H1 (cell line): ENCODE measurements at regions of chr12 and their contacts with region 1.

Region 1: GRCh38 chr12:6285063-6285477 is 25.4 kb upstream of the PLEKHG6 start:
- DNase-seq: peak in 1 of 2 experiments; percentile 85
- H3K4me3 ChIP-seq: no peak overlapping the region
- H3K27ac ChIP-seq: no peak overlapping the region
- H3K4me1 ChIP-seq: peaks cover 0 to 5% (median 3%) of the 10 kb centered on the region in 4 experiments; a peak in 3 of 7 replicates
- H3K27me3 ChIP-seq: peaks cover 0 to 2% (median 0%) of the 10 kb centered on the region in 4 experiments; a peak in 2 of 7 replicates
- CTCF ChIP-seq: peak; percentile 83 to 92 (median 91)
- EP300 ChIP-seq: no peak
- POLR2A ChIP-seq: no peak
- RAD21 ChIP-seq: peak; percentile 98 to 99

Region 2: GRCh38 chr12:5733136-5733755 is 551.8 kb before region 1 on chr12:
- CTCF ChIA-PET with region 1: no interaction called
- POLR2A ChIA-PET with region 1: no interaction called
- DNase-seq: no peak
- H3K4me3 ChIP-seq: no peak overlapping the region
- H3K27ac ChIP-seq: no peak overlapping the region
- H3K4me1 ChIP-seq: no peaks in the 10 kb centered on the region
- H3K27me3 ChIP-seq: peaks cover 0 to 1% (median 0%) of the 10 kb centered on the region in 4 experiments; a peak in 1 of 7 replicates
- CTCF ChIP-seq: no peak
- EP300 ChIP-seq: no peak
- POLR2A ChIP-seq: no peak
- RAD21 ChIP-seq: no peak

Region 3: GRCh38 chr12:5988659-5989116 is 296.4 kb before region 1 on chr12:
- CTCF ChIA-PET with region 1: interaction called, 23 read pairs
- POLR2A ChIA-PET with region 1: no interaction called
- DNase-seq: peak; percentile 75 to 86
- H3K4me3 ChIP-seq: no peak overlapping the region
- H3K27ac ChIP-seq: no peak overlapping the region; the same call in 1 of the 2 replicates
- H3K4me1 ChIP-seq: peaks cover 2 to 6% (median 4%) of the 10 kb centered on the region in 4 experiments; a peak in 6 of 7 replicates
- H3K27me3 ChIP-seq: no peaks in the 10 kb centered on the region
- CTCF ChIP-seq: peak; percentile 93 to 99 (median 97)
- EP300 ChIP-seq: peak in 1 of 2 experiments; percentile 57; a peak in 1 of 3 replicates
- POLR2A ChIP-seq: no peak
- RAD21 ChIP-seq: peak; percentile 98 to 99

Region 4: DNA sequence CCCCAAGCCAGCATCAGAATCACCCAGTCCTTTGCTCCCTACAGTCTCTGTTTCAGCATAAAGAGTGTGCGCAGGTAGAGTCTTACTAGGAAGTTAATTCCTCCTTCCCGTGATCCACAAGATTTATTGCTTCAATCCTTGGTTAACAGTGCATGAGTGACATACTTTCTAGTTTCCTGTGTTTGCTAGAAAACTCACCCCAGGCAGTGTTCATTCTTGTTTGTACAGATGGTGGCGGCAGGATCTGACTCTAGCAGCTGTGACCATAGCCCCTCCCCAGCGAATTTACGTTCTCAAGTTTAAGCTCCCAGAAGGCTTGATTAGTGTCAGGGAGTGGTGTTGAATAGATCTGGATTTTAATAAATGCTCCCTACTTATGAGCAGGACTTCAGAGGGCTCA is 264.1 kb before region 1 on chr12:
- CTCF ChIA-PET with region 1: no interaction called
- POLR2A ChIA-PET with region 1: no interaction called
- DNase-seq: no peak
- H3K4me3 ChIP-seq: no peak overlapping the region
- H3K27ac ChIP-seq: no peak overlapping the region
- H3K4me1 ChIP-seq: no peaks in the 10 kb centered on the region
- H3K27me3 ChIP-seq: no peaks in the 10 kb centered on the region
- CTCF ChIP-seq: no peak
- EP300 ChIP-seq: no peak
- POLR2A ChIP-seq: no peak
- RAD21 ChIP-seq: no peak

Region 5: GRCh38 chr12:6062757-6063735 is 222.0 kb before region 1 on chr12:
- CTCF ChIA-PET with region 1: interaction called, 130 read pairs
- POLR2A ChIA-PET with region 1: interaction called, 3 read pairs
- DNase-seq: peak in 1 of 2 experiments; percentile 90
- H3K4me3 ChIP-seq: no peak overlapping the region
- H3K27ac ChIP-seq: no peak overlapping the region
- H3K4me1 ChIP-seq: peaks cover 7 to 9% (median 7%) of the 10 kb centered on the region in 4 experiments
- H3K27me3 ChIP-seq: peaks cover 0 to 3% (median 0%) of the 10 kb centered on the region in 4 experiments; a peak in 1 of 7 replicates
- CTCF ChIP-seq: peak; percentile 92 to 99 (median 98)
- EP300 ChIP-seq: no peak
- POLR2A ChIP-seq: no peak
- RAD21 ChIP-seq: peak; percentile 97

Region 6: DNA sequence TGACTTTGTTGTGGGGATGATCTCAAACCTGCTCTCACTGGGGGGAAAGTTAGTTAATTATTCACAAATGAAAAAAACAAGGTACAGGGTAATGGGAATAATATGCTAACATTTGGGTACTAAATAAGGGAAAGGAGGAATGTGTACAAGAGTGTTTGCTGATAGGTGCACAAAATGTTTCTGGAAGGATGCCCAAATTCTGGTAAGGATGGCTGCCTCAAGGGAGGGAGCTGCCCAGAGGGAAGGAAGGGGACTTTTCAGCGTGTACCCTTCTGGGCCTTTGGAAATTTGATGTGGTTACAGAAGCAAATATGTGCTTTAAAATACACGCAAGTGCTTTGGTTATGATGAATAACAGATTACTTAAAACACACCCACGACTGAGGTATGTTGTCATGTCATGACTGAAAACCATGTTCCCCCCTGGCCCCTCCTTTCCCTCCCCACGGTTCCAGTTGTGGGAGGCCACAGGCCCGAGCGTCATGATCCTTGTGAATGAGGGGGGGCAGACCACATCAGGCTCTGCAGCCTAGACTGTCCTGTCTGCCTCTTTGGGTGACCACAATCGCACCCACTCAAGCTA is 17.8 kb before region 1 on chr12:
- CTCF ChIA-PET with region 1: interaction called, 53 read pairs
- POLR2A ChIA-PET with region 1: interaction called, 3 read pairs
- DNase-seq: no peak
- H3K4me3 ChIP-seq: no peak overlapping the region
- H3K27ac ChIP-seq: no peak overlapping the region
- H3K4me1 ChIP-seq: peaks cover 9 to 17% (median 13%) of the 10 kb centered on the region in 4 experiments
- H3K27me3 ChIP-seq: no peaks in the 10 kb centered on the region
- CTCF ChIP-seq: no peak
- EP300 ChIP-seq: no peak
- POLR2A ChIP-seq: no peak
- RAD21 ChIP-seq: no peak

Region 7: DNA sequence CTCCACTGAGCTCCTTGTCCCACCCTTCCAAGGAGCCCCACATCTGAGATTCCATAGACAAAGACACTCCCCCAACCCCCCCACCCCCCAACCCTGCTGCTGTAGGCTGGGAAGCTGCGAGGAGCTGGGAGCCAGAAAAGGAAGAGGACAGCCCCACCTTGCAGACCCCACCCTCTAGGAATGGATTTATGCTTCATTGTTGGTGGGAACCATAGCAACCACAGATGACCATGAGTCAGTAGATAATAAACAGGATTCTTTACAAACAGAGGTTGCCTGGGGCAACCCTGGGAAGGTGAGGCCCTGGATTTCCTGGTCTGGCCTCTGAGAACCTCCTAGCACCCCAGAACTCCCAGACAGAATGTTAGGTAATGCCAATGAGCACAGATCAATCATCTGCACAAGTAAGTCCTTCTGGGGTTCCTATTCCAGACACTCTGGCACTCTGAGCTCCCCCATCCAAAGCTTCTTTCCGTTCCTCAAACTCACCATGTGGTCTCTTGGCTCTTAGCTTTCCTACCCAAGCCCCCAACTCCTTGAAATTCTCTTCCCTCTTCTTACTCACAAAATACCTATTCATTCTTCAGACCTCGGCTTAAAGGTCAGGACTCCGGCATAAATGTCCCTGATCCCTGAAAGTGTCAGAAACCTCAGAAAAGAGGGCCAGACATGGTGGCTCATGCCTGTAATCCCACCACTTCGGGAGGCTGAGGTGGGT is 10.2 kb after region 1 on chr12:
- CTCF ChIA-PET with region 1: interaction called, 17 read pairs
- POLR2A ChIA-PET with region 1: no interaction called
- DNase-seq: no peak
- H3K4me3 ChIP-seq: no peak overlapping the region
- H3K27ac ChIP-seq: no peak overlapping the region
- H3K4me1 ChIP-seq: peaks cover 0 to 5% (median 0%) of the 10 kb centered on the region in 4 experiments; a peak in 1 of 7 replicates
- H3K27me3 ChIP-seq: no peaks in the 10 kb centered on the region
- CTCF ChIP-seq: no peak
- EP300 ChIP-seq: no peak
- POLR2A ChIP-seq: no peak
- RAD21 ChIP-seq: no peak

Region 8: GRCh38 chr12:6392504-6393077 is 107.5 kb after region 1 on chr12:
- CTCF ChIA-PET with region 1: no interaction called
- POLR2A ChIA-PET with region 1: no interaction called
- DNase-seq: no peak
- H3K4me3 ChIP-seq: no peak overlapping the region
- H3K27ac ChIP-seq: no peak overlapping the region
- H3K4me1 ChIP-seq: peaks cover 0 to 6% (median 3%) of the 10 kb centered on the region in 4 experiments; a peak in 4 of 7 replicates
- H3K27me3 ChIP-seq: no peaks in the 10 kb centered on the region
- CTCF ChIP-seq: no peak
- EP300 ChIP-seq: no peak
- POLR2A ChIP-seq: no peak
- RAD21 ChIP-seq: no peak

Region 9: DNA sequence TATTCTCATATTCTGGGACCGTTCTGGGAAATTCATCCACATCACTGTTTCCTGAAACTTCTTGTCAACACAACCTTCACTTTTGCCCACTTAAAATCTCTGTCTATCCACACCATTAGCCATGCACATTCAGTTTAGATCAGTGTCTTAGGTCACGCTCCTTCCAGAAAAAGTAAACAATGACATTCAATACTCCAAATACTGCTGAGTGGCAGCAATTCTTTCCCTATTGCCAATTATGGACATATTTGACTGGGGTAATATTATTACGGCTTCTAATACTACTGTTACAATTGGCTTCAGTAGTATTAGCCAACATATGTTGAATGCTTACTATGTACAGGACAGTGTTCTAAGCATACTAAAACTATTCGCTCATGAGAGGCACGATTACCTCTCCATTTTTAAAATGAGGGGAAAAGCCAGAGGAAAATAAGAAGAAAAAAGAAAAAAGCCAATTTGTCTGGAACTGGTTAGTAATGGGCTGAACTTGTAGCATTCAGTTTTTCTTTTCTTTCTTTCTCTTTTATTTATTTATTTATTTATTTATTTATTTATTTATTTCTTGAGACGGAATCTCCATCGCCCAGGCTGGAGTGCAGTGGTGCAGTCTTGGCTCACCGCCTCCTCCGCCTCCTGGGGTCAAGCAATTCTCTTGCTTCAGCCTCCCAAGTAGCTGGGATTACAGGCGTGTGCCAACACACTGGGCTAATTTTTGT is 122.3 kb after region 1 on chr12:
- CTCF ChIA-PET with region 1: no interaction called
- POLR2A ChIA-PET with region 1: no interaction called
- DNase-seq: no peak
- H3K4me3 ChIP-seq: no peak overlapping the region
- H3K27ac ChIP-seq: no peak overlapping the region
- H3K4me1 ChIP-seq: no peaks in the 10 kb centered on the region
- H3K27me3 ChIP-seq: no peaks in the 10 kb centered on the region
- CTCF ChIP-seq: no peak
- EP300 ChIP-seq: no peak
- POLR2A ChIP-seq: no peak
- RAD21 ChIP-seq: no peak